Sciatic nerve (tissue), 2 donors: ENCODE measurements at regions of chr18 and their contacts with region 1.

Region 1: GRCh38 chr18:50231621-50232020 is 34.7 kb downstream of the CFAP53 start:
- DNase-seq: no peak
- ATAC-seq: no peak

Region 2: DNA sequence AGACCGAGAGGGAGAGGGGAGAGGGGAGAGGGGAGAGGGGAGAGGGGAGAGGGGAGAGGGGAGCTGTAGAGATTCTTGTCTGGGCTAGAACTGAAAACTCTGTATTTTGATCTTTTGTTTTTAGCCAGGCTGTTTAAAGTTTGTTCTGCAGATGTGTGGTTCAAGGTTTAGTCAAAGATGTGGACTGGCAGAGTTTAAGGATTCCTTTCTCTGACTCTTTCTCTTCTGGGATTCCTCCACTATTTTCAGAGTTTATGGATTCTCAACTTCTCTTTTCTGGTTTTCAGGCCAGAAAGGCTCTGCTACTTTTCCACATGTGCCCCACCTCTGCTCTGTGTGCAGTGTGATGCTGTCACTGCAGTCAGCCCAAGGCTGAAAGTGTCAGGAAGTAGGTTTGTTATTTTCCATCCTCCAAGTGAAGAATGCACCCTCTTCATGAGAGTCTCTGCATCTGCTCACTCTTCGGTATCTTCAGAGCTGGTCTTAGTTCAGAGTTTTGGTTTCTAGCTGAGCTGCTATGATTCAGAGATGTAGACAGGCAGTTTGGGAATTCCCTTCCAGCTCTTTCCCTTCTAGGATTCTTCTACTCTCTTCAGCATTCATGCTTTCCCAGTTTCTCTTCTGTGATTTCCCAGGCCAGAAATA is 1150.0 kb before region 1 on chr18:
- intact Hi-C with region 1: loop called (anchors 5 kb)
- DNase-seq: no peak
- ATAC-seq: no peak

Region 3: DNA sequence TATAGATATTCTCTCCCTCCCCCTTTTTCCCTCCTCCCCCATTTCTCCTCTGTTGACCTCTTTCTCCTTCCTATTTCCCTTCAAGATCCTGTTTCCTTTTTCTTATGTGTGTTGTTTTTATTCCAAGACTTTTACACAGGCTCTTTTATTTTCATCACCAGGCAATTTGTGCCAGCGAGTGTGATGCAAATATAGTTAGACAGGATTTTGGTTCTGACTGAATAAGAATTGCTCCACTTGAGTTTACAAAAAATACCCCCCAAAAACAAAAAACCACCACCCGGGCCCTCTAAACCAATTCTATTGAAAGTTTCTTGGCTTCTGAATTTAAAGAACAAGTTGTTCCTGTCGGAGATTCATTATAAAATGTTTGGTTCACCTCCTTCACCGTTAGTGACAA is 277.4 kb after region 1 on chr18:
- intact Hi-C with region 1: no loop called
- DNase-seq: no peak
- ATAC-seq: no peak